ENCODE measurements at regions of chr9 and their contacts with region 1.

Region 1: DNA sequence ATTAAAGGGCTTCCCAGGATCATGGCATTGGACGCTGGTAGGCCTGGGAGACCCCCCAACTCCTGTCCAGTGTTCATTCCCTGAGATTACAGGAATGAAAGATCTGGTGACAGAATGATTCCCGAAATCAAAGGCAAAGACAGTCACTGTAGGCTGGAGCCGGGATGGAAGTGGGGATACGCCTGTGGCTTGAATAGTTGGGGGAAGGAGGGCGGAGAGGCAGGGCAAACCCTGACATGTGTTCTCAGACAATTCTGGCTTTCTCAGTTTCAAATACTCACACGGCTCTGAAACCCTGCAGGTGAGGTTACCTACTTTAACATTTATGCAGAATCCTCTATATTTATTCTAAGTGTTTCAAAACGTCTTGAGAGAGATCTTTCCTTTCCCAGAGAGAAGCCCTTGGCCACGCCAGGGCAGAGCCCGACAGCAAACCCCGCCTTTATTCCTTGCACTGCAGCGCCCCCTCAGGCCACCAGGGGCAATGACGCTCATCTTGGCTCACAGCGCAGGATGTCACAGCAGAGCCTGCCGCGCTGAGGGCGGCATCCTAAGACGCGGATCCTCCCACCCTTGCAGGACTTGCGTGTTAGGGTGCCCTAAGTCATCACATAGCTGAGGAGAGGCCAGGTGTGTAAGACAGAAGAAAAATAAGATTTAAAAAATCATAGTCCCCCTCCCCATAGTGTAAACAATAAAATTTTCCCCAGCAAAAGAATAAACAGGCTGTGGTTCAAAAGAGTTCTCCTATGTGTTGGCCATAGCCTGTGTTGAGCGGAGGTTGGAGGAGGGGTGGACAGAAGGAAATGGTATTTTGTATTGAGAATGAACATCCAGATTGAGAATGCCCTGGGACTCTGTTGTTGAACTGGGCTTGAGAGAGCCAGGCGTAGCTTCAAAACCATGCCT is 284.5 kb downstream of the NTRK2 start:
- DNase-seq: peak; percentile 62 to 87 (median 81)
- H3K4me3 ChIP-seq: no peak overlapping the region
- H3K27ac ChIP-seq: no peak overlapping the region
- H3K4me1 ChIP-seq: no peaks in the 10 kb centered on the region
- H3K27me3 ChIP-seq: no peaks in the 10 kb centered on the region
- CTCF ChIP-seq: peak; percentile 59 to 71 (median 71)
- EP300 ChIP-seq: no peak
- POLR2A ChIP-seq: no peak

Region 2: GRCh38 chr9:84697509-84698114 is 256.4 kb before region 1 on chr9:
- intact Hi-C with region 1: loop called in 1 of 4 experiments (anchors 10 kb)
- DNase-seq: peak; percentile 37 to 79 (median 66)
- H3K4me3 ChIP-seq: no peak overlapping the region
- H3K27ac ChIP-seq: no peak overlapping the region
- H3K4me1 ChIP-seq: peaks cover 8% of the 10 kb centered on the region
- H3K27me3 ChIP-seq: no peaks in the 10 kb centered on the region
- CTCF ChIP-seq: peak in 2 of 3 donors; percentile 32 to 38
- EP300 ChIP-seq: no peak
- POLR2A ChIP-seq: no peak

Region 3: DNA sequence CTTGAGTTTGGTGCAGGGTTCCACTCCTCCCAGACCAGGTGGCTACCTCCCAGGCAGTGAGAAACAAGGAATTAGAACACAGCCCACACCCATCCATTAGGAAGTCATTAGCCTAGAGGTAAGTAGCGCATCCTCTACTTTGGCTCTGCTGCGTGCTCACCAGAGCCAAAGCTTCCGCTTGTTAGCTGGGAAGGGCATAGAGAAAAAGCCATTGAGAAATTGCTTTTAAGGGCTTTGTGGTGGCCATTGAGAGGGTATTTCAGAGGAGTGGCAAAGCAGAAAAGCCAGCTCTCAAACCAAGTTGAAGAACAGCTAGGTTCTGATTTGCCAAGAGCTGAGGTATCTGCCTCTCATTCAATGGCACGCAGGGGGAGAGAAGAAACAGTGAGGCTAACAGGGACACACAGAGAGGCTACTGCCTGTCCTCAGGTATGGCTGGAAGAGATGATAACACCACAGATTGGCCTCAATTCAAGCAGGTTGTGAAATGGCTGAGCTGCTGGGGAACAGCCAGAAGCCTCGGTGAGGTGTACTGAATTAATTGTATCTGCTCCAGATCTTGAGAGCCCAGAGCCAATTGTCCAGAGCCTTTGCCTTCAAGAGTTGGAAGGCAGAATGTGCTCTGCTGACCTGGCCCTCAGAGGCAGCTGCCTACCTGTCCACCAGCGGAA is 165.1 kb before region 1 on chr9:
- intact Hi-C with region 1: no loop called
- DNase-seq: no peak
- H3K4me3 ChIP-seq: no peak overlapping the region
- H3K27ac ChIP-seq: no peak overlapping the region
- H3K4me1 ChIP-seq: no peaks in the 10 kb centered on the region
- H3K27me3 ChIP-seq: no peaks in the 10 kb centered on the region
- CTCF ChIP-seq: no peak
- EP300 ChIP-seq: no peak
- POLR2A ChIP-seq: no peak

Region 4: DNA sequence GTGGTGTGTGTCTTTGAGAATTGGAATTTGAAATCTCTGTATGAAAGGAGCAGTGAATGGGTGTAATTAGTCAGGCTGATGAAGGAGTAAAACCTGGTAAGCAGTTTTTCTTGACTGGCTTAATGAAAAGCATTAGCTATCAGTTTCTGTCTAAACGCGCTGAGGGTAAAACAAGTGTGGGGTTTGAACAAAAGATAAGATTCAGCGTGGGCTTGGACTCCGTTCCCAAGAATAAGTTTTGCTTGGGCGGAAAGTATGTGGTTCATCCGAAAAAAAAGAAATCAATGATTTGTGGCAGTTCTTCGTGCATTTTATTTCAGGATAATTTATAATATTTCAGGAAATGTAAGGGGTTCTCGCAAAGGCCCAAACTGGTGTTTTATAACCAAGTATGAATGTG is 67.2 kb before region 1 on chr9:
- intact Hi-C with region 1: no loop called
- DNase-seq: no peak
- H3K4me3 ChIP-seq: no peak overlapping the region
- H3K27ac ChIP-seq: no peak overlapping the region
- H3K4me1 ChIP-seq: no peaks in the 10 kb centered on the region
- H3K27me3 ChIP-seq: no peaks in the 10 kb centered on the region
- CTCF ChIP-seq: no peak
- EP300 ChIP-seq: no peak
- POLR2A ChIP-seq: no peak

Region 5: DNA sequence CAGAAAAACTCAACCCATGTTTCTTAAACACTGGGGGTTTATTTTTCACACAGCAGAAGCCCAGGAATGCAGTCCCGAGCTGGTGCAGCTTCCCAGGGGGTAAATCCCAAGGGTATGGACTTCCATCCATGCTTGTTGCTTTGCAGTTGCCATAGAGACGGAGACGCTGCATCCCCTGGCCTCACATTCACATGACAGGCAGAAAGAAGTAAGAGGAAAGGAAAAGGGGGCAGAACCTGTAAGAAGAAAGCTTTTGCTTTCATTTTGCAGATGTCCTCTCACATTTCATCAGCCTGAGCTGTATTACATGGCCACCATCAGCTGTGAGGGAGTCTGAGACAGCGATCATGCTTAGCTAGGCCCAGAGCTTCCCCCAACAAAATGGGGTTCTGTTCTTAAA is 466.7 kb after region 1 on chr9:
- intact Hi-C with region 1: no loop called
- DNase-seq: no peak
- H3K4me3 ChIP-seq: no peak overlapping the region
- H3K27ac ChIP-seq: no peak overlapping the region
- H3K4me1 ChIP-seq: no peaks in the 10 kb centered on the region
- H3K27me3 ChIP-seq: no peaks in the 10 kb centered on the region
- CTCF ChIP-seq: no peak
- EP300 ChIP-seq: no peak
- POLR2A ChIP-seq: no peak

Measured in ovary (tissue), 10 donors.